Caco-2 (cell line): ENCODE measurements at regions of chr7 and their contacts with region 1.

Region 1: DNA sequence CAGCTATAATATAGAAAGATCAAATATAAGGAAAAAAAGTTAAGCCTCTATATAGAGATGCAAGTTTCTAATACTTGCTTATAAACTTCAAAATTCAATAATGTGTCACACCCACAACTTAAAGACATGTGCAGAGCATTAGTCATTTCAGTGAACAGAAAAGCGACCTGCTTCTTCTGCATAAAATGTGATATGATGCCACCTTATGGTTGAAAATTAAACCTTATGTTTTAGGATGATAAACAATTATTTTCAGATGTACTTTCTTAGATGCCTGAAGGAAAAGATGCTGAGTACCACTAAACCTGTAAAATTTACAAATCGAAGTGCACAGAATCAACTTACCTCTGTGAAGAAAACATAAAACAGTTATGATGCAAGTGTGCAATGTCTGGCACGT is 96.0 kb downstream of the MTERF1 start:
- DNase-seq: no peak
- H3K4me3 ChIP-seq: no peak overlapping the region
- H3K4me3 Mint-ChIP-seq: no peak overlapping the region
- H3K27ac Mint-ChIP-seq: no peak overlapping the region
- H3K4me1 ChIP-seq: no peaks in the 10 kb centered on the region
- H3K4me1 Mint-ChIP-seq: no peaks in the 10 kb centered on the region
- H3K27me3 ChIP-seq: no peaks in the 10 kb centered on the region
- H3K27me3 Mint-ChIP-seq: peaks cover 2% of the 10 kb centered on the region
- CTCF ChIP-seq: peak; percentile 2 to 34

Region 2: DNA sequence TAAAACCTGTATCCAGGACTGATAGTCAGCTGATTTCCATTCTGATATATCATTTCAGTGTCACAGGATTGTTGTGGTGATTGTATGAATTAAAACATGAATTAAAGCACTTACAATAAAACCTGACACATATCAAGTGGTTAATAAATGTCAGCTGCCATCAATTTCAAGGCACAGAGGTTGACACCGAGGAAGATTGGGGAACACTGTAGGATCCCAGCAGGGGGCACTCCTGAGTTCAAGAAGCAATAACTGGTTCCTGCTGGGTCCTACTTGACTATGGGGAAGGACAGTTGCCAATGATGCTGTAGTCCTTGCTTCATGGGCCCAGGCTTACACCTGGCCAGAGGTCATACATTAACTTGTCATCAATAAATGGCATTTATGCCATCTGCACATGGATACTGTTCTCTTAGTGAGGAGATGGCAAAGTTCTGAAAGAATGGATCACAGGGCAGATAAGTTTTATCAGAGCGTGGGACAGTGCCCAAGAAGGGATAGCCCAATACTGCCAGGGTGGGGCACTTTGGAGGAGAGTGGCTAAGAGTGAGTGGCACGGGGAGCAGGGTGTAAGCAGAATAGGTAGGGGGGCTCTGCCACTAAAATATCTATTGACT is 496.1 kb before region 1 on chr7:
- CTCF ChIA-PET with region 1: no interaction called
- POLR2A ChIA-PET with region 1: no interaction called
- intact Hi-C with region 1: loop called (anchors 1 kb)
- DNase-seq: peak in 1 of 2 experiments; percentile 48
- H3K4me3 ChIP-seq: no peak overlapping the region
- H3K4me3 Mint-ChIP-seq: no peak overlapping the region
- H3K27ac Mint-ChIP-seq: no peak overlapping the region
- H3K4me1 ChIP-seq: no peaks in the 10 kb centered on the region
- H3K4me1 Mint-ChIP-seq: no peaks in the 10 kb centered on the region
- H3K27me3 ChIP-seq: no peaks in the 10 kb centered on the region; the same call in 1 of the 2 replicates
- H3K27me3 Mint-ChIP-seq: peaks cover 18% of the 10 kb centered on the region
- CTCF ChIP-seq: peak; percentile 28 to 37

Region 3: DNA sequence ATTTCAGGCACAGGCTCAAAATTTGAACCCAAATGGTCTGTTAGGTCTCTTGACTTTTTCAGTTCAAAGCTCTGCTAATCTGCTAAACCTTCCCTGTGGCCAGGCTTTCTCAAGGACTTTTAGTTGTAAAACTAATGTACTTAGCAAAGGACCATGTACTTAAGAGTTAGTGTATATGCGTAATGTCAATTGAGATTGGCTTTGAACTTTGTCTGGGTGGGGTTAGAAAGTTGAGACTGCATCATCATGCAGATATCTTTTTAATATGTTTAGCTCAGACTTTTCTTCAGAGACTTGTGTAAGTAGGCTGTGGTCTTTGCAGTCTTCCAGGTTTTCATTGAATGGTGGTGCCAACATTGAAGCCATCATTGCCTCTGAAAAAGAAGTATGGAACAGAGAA is 316.1 kb after region 1 on chr7:
- CTCF ChIA-PET with region 1: no interaction called
- POLR2A ChIA-PET with region 1: no interaction called
- intact Hi-C with region 1: no loop called
- DNase-seq: no peak
- H3K4me3 ChIP-seq: no peak overlapping the region
- H3K4me3 Mint-ChIP-seq: no peak overlapping the region
- H3K27ac Mint-ChIP-seq: no peak overlapping the region
- H3K4me1 ChIP-seq: no peaks in the 10 kb centered on the region
- H3K4me1 Mint-ChIP-seq: peaks cover 11% of the 10 kb centered on the region
- H3K27me3 ChIP-seq: no peaks in the 10 kb centered on the region
- H3K27me3 Mint-ChIP-seq: no peaks in the 10 kb centered on the region
- CTCF ChIP-seq: no peak